Calu3 (cell line): ENCODE measurements at regions of chr2 and their contacts with region 1.

Region 1: GRCh38 chr2:14288016-14288415 is 344.5 kb upstream of the LRATD1 start:
- DNase-seq: peak; percentile 73
- H3K4me3 Mint-ChIP-seq: no peak overlapping the region
- H3K27ac Mint-ChIP-seq: peak overlapping the region; percentile 42
- H3K4me1 Mint-ChIP-seq: peaks cover 28% of the 10 kb centered on the region
- H3K27me3 Mint-ChIP-seq: no peaks in the 10 kb centered on the region
- CTCF ChIP-seq: no peak

Region 2: DNA sequence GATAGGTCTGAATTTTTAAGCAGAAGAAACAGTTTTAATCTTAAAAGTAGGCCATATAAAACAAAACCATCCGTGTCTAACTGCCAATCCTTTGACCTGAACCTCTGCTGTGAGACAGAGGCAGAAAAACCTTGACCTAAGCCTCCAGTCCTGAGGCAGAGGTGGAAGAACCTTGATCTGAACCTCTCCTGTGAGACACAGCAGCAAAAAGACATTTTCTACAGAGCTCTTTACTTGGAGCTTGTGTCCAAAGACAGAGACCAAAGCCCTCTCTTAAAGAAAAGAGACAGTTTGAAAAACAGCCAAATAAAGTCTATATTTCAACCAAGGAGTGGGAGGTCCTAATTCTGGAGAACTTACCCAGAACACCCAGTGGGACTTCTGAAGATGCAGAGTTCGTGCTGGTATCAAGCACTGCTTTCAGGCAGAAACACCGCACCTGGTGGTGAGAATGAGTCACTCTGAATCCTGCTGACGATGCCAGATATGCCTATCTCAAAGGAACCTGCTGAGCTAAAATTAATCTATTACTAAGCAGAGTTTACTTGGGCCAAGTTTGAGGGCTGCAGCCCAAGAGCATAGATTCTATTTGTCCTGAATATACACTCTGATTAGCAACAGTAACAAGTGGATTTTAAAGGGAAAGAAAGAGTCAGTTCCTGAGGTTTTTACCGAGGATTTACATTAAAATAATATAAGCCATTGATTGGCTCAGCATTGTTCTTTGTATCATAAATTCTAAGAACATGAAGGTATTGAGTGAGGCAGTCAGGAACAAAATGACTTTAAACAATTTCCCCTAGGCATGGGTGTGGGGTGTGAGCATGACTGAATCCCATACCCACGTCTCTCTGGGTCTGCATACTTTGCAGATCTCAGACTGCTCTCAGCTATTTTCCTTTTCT is 764.8 kb before region 1 on chr2:
- CTCF ChIA-PET with region 1: no interaction called
- intact Hi-C with region 1: loop called (anchors 10 kb)
- DNase-seq: peak; percentile 72
- H3K4me3 Mint-ChIP-seq: peak overlapping the region; percentile 54
- H3K27ac Mint-ChIP-seq: peak overlapping the region; percentile 79
- H3K4me1 Mint-ChIP-seq: peaks cover 40% of the 10 kb centered on the region
- H3K27me3 Mint-ChIP-seq: no peaks in the 10 kb centered on the region
- CTCF ChIP-seq: no peak

Region 3: GRCh38 chr2:15591692-15592463 is 1303.9 kb after region 1 on chr2 and contains the start of gene DDX1:
- CTCF ChIA-PET with region 1: no interaction called
- intact Hi-C with region 1: loop called (anchors 5 kb)
- DNase-seq: peak; percentile 88
- H3K4me3 Mint-ChIP-seq: peak within 1 kb of the TSS; percentile 98
- H3K27ac Mint-ChIP-seq: peak within 1 kb of the TSS; percentile 94
- H3K4me1 Mint-ChIP-seq: peaks cover 6% of the 10 kb centered on the region
- H3K27me3 Mint-ChIP-seq: no peaks in the 10 kb centered on the region
- CTCF ChIP-seq: no peak
- total RNA-seq, gene DDX1: 99.7 and 106 TPM in 2 replicates